Colonic mucosa (tissue), 4 donors: ENCODE measurements at regions of chr11 and their contacts with region 1.

Region 1: GRCh38 chr11:115334932-115335788 is 169.1 kb downstream of the CADM1 start:
- DNase-seq: no peak
- H3K4me3 ChIP-seq: no peak overlapping the region
- H3K27ac ChIP-seq: no peak overlapping the region
- H3K4me1 ChIP-seq: no peaks in the 10 kb centered on the region
- H3K27me3 ChIP-seq: no peaks in the 10 kb centered on the region
- CTCF ChIP-seq: peak; percentile 74

Region 2: GRCh38 chr11:114774599-114775361 is 560.4 kb before region 1 on chr11:
- intact Hi-C with region 1: loop called (anchors 10 kb)
- DNase-seq: peak; percentile 56
- H3K4me3 ChIP-seq: no peak overlapping the region
- H3K27ac ChIP-seq: no peak overlapping the region
- H3K4me1 ChIP-seq: no peaks in the 10 kb centered on the region
- H3K27me3 ChIP-seq: no peaks in the 10 kb centered on the region
- CTCF ChIP-seq: peak; percentile 58

Region 3: GRCh38 chr11:115244758-115245157 is 90.4 kb before region 1 on chr11:
- intact Hi-C with region 1: no loop called
- DNase-seq: no peak
- H3K4me3 ChIP-seq: no peak overlapping the region
- H3K27ac ChIP-seq: no peak overlapping the region
- H3K4me1 ChIP-seq: no peaks in the 10 kb centered on the region
- H3K27me3 ChIP-seq: no peaks in the 10 kb centered on the region
- CTCF ChIP-seq: no peak

Region 4: GRCh38 chr11:115504276-115505158 is 169.4 kb after region 1 on chr11 and contains the start of gene CADM1:
- intact Hi-C with region 1: loop called (anchors 2 kb)
- DNase-seq: peak; percentile 91
- H3K4me3 ChIP-seq: peak within 1 kb of the TSS; percentile 45
- H3K27ac ChIP-seq: peak within 1 kb of the TSS; percentile 69
- H3K4me1 ChIP-seq: peaks cover 2% of the 10 kb centered on the region
- H3K27me3 ChIP-seq: peaks cover 30% of the 10 kb centered on the region
- CTCF ChIP-seq: peak; percentile 63
- total RNA-seq, gene CADM1: 5.2 to 6.4 TPM

Region 5: GRCh38 chr11:115678942-115679341 is 343.8 kb after region 1 on chr11:
- intact Hi-C with region 1: loop called (anchors 2 kb)
- DNase-seq: peak; percentile 60
- H3K4me3 ChIP-seq: no peak overlapping the region
- H3K27ac ChIP-seq: no peak overlapping the region
- H3K4me1 ChIP-seq: no peaks in the 10 kb centered on the region
- H3K27me3 ChIP-seq: no peaks in the 10 kb centered on the region
- CTCF ChIP-seq: peak; percentile 45